ENCODE measurements at regions of chr13 and their contacts with region 1.

Region 1: DNA sequence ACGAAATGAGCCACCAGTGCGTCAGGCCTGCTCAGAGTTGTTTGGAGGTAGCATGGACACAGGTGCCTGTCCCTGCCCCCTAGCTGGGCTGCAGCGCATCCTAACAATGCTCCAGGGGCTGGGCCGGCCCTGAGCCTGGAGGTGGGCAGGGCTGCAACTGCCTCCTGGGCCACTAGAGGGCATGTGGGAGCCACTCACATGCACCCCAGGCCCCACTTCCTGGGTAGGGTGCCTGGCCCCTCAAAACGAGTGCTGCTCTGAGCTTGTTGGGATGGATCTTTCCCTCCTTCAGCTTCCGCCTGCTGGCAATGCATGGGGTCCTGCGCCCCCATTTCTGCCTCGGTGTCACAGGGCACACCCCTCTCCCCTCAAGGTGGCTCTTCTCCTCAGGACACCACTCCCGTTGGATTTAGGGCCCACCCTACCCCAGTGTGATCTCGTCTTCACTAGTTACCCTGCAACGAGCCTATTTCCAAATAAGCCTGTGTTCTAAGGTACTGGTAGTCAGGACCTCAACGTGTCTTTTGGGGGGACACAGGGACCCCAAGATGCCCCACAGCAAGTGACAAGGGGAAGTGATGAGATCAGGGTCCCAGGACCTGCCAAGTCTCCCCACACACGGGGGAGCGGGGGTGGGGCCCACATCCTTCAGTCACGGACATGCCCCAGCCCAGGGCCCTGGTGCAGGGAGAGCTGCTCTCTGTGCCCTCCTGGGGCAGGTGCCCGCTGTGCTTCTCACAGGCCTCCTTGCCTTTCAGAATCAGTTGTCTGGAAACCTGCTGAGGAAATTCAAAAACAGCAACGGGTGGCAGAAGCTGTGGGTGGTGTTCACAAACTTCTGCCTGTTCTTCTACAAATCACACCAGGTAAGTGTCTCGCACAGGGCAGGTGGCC is 131.3 kb downstream of the STK24 start:
- DNase-seq: peak; percentile 89
- ATAC-seq: peak; percentile 97
- H3K4me3 Mint-ChIP-seq: no peak overlapping the region
- H3K27ac Mint-ChIP-seq: peak overlapping the region; percentile 92
- H3K4me1 Mint-ChIP-seq: peaks cover 16% of the 10 kb centered on the region
- H3K27me3 Mint-ChIP-seq: no peaks in the 10 kb centered on the region
- CTCF ChIP-seq: peak; percentile 94

Region 2: GRCh38 chr13:98466634-98467236 is 21.1 kb after region 1 on chr13:
- CTCF ChIA-PET with region 1: interaction called, 19 read pairs
- POLR2A ChIA-PET with region 1: interaction called, 3 read pairs
- intact Hi-C with region 1: no loop called
- DNase-seq: peak; percentile 80
- ATAC-seq: peak; percentile 96
- H3K4me3 Mint-ChIP-seq: no peak overlapping the region
- H3K27ac Mint-ChIP-seq: peak overlapping the region; percentile 56
- H3K4me1 Mint-ChIP-seq: peaks cover 34% of the 10 kb centered on the region
- H3K27me3 Mint-ChIP-seq: no peaks in the 10 kb centered on the region
- CTCF ChIP-seq: peak; percentile 48

Region 3: GRCh38 chr13:98484289-98485219 is 39.0 kb after region 1 on chr13:
- CTCF ChIA-PET with region 1: interaction called, 19 read pairs
- POLR2A ChIA-PET with region 1: interaction called, 3 read pairs
- intact Hi-C with region 1: no loop called
- DNase-seq: peak; percentile 84
- ATAC-seq: peak; percentile 70
- H3K4me3 Mint-ChIP-seq: no peak overlapping the region
- H3K27ac Mint-ChIP-seq: peak overlapping the region; percentile 75
- H3K4me1 Mint-ChIP-seq: peaks cover 86% of the 10 kb centered on the region
- H3K27me3 Mint-ChIP-seq: no peaks in the 10 kb centered on the region
- CTCF ChIP-seq: no peak

Region 4: GRCh38 chr13:98528663-98529570 is 83.3 kb after region 1 on chr13:
- CTCF ChIA-PET with region 1: interaction called, 10 read pairs
- POLR2A ChIA-PET with region 1: no interaction called
- intact Hi-C with region 1: no loop called
- DNase-seq: peak; percentile 30
- ATAC-seq: peak; percentile 80
- H3K4me3 Mint-ChIP-seq: peak overlapping the region; percentile 31
- H3K27ac Mint-ChIP-seq: peak overlapping the region; percentile 84
- H3K4me1 Mint-ChIP-seq: peaks cover 86% of the 10 kb centered on the region
- H3K27me3 Mint-ChIP-seq: no peaks in the 10 kb centered on the region
- CTCF ChIP-seq: no peak

Region 5: GRCh38 chr13:98581971-98582680 is 136.5 kb after region 1 on chr13:
- CTCF ChIA-PET with region 1: interaction called, 10 read pairs
- POLR2A ChIA-PET with region 1: no interaction called
- intact Hi-C with region 1: no loop called
- DNase-seq: peak; percentile 21
- ATAC-seq: peak; percentile 60
- H3K4me3 Mint-ChIP-seq: no peak overlapping the region
- H3K27ac Mint-ChIP-seq: peak overlapping the region; percentile 22
- H3K4me1 Mint-ChIP-seq: peaks cover 25% of the 10 kb centered on the region
- H3K27me3 Mint-ChIP-seq: no peaks in the 10 kb centered on the region
- CTCF ChIP-seq: no peak

Region 6: DNA sequence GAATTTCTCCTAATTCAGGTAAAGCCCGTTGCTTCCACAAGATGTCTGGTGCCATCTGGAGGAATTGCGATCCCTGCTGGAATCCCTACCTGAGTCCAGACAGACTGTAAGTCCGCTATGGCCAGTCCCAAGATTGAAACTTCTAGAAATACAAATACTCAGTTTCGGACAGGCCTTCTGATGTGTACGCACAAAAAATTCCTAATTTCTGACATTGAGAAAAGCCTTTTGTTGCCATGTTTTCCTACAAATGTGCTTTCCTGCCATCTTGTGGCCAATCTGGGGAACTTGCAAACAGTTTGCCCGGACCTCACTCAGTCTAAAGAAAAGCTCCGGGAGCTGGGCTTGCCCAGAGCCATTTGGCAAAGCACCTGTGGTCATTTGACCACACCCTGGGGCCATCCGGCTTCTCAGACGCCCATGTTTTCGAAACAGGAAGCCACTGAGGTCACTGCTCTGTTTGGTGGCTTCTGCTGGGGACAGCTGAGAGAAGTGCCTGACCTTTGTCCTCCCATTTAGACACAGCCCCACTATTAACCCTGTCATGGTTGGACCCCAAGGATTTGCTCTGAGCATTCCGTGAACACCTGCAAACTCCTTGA is 227.5 kb after region 1 on chr13:
- CTCF ChIA-PET with region 1: interaction called, 62 read pairs
- POLR2A ChIA-PET with region 1: no interaction called
- intact Hi-C with region 1: loop called (anchors 5 kb)
- DNase-seq: peak; percentile 58
- ATAC-seq: peak; percentile 84
- H3K4me3 Mint-ChIP-seq: no peak overlapping the region
- H3K27ac Mint-ChIP-seq: no peak overlapping the region
- H3K4me1 Mint-ChIP-seq: no peaks in the 10 kb centered on the region
- H3K27me3 Mint-ChIP-seq: no peaks in the 10 kb centered on the region
- CTCF ChIP-seq: peak; percentile 92